Activated CD4-positive, alpha-beta T cell treated with anti-CD3 and anti-CD28 coated beads, Interleukin-2, amount 10 ng/mL, durations not matched to agents 24 days and 14 days (primary cell): ENCODE measurements at regions of chr15 and their contacts with region 1.

Region 1: DNA sequence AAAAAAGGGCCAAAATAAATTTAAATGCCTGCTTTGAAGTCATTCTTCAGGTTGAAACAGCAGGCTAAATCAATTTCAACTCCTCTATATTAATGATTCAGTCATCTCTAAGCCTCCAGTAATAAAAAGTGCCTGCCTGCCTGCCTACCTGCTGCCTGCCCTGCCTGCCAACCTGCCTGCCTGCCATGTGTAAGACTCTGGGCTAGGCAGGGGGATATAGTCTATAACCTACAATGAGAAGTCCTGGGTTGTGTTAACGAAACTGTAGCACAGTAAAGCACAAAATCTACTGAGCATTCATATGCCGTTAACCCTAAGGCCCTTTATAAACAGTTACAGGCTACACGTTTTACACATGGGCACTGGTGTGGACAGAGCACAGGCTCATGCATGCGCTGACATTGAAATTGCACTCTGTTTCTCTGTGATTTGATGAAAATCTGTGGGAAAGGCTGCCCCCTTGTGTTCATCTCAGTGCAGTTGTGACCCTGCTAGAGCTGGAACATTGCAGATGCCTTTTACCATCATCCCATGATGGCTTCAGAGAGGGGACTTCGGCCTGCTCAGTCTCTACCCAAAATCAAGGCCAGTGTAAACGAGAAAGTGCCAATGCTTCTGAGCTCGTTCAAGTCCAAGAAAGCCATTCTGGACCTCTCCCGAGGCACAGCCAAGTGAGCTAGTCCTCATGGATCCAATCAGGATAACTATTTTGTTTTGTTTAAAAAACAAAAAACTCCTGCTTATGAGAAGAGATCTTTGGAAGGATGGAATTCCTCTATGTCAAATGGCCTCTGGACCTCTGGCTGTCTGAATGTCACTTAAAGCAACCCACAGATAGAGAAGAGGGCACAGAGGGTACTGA is 64.6 kb downstream of the EFL1 start:
- DNase-seq: peak; percentile 89
- H3K4me3 Mint-ChIP-seq: no peak overlapping the region
- H3K27ac Mint-ChIP-seq: no peak overlapping the region
- H3K4me1 Mint-ChIP-seq: peaks cover 5% of the 10 kb centered on the region
- H3K27me3 Mint-ChIP-seq: no peaks in the 10 kb centered on the region

Region 2: DNA sequence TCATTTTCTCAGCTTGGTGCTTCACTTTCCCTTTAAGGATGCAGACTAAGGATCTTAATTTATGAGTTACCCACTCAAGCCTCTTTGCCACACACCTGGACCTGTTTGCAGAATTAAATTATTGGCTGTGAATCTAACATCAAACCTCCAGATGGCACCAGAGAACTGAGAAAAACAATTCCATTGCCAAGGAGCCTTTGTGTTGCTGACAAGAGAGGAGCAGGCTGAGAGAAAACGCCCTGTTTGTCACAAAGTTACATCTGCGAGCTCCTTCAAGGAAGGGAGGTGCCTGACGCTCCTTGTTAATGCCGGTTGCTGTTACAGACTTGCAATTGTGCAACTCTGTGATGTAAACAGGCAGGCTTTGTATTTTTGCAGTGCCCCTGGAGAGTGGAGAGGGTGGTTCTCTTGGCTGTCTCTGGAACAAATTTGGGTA is 787.6 kb before region 1 on chr15:
- intact Hi-C with region 1: loop called (anchors 10 kb)
- DNase-seq: peak; percentile 83
- H3K4me3 Mint-ChIP-seq: no peak overlapping the region
- H3K27ac Mint-ChIP-seq: no peak overlapping the region
- H3K4me1 Mint-ChIP-seq: peaks cover 10% of the 10 kb centered on the region
- H3K27me3 Mint-ChIP-seq: peaks cover 29% of the 10 kb centered on the region

Region 3: GRCh38 chr15:81887912-81888311 is 310.1 kb before region 1 on chr15:
- intact Hi-C with region 1: no loop called
- DNase-seq: no peak
- H3K4me3 Mint-ChIP-seq: no peak overlapping the region
- H3K27ac Mint-ChIP-seq: no peak overlapping the region
- H3K4me1 Mint-ChIP-seq: no peaks in the 10 kb centered on the region
- H3K27me3 Mint-ChIP-seq: peaks cover 4% of the 10 kb centered on the region

Region 4: GRCh38 chr15:82108489-82109078 is 89.4 kb before region 1 on chr15:
- intact Hi-C with region 1: loop called (anchors 1 kb)
- DNase-seq: peak; percentile 94
- H3K4me3 Mint-ChIP-seq: no peak overlapping the region
- H3K27ac Mint-ChIP-seq: peak overlapping the region; percentile 50
- H3K4me1 Mint-ChIP-seq: peaks cover 4% of the 10 kb centered on the region
- H3K27me3 Mint-ChIP-seq: peaks cover 8% of the 10 kb centered on the region

Region 5: DNA sequence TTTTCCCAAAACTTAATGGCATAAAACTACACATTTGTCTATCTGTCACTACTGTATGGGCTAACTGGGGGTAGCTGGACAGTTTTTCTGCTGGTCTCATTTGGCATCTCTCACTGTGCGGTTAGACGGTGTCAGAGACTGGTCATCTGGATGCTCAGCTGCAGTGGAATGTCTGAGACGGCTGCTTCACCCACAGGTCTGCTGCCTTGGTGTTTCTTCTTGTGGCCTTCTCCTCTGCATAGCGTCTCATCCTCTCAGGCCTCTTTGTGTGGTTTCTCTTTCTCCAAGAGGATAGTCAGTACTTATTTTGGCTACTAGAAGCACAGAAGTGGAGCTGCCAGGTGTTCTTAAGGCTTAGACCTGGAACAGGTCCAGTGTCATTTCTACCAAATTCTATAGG is 195.7 kb after region 1 on chr15:
- intact Hi-C with region 1: no loop called
- DNase-seq: no peak
- H3K4me3 Mint-ChIP-seq: no peak overlapping the region
- H3K27ac Mint-ChIP-seq: no peak overlapping the region
- H3K4me1 Mint-ChIP-seq: peaks cover under 1% of the 10 kb centered on the region
- H3K27me3 Mint-ChIP-seq: no peaks in the 10 kb centered on the region